ENCODE measurements at regions of chr1 and their contacts with region 1.

Region 1: DNA sequence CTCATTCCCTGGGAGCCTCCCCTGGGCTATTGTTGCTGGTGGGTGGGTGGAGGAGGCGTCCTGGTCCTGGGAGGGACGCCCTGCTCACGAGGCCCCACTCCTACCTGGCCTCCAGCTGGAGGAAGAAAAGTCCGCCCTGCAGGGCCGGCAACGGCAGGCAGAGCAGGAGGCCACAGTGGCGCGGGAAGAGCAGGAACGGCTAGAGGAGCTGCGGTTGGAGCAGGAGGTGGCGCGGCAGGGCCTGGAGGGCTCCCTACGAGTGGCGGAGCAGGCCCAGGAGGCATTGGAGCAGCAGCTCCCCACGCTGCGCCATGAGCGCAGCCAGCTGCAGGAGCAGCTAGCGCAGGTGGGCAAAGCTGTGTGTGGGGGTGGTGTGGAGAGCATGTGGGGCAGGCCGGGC is 24.9 kb downstream of the CROCC start:
- DNase-seq: no peak
- ATAC-seq: no peak
- H3K4me3 ChIP-seq: no peak overlapping the region
- H3K4me3 Mint-ChIP-seq: no peak overlapping the region
- H3K27ac ChIP-seq: no peak overlapping the region
- H3K27ac Mint-ChIP-seq: no peak overlapping the region
- H3K4me1 ChIP-seq: peaks cover under 1% of the 10 kb centered on the region
- H3K4me1 Mint-ChIP-seq: no peaks in the 10 kb centered on the region
- H3K27me3 ChIP-seq: no peaks in the 10 kb centered on the region
- H3K27me3 Mint-ChIP-seq: no peaks in the 10 kb centered on the region
- CTCF ChIP-seq: no peak

Region 2: GRCh38 chr1:16375521-16376359 is 570.9 kb before region 1 on chr1:
- intact Hi-C with region 1: no loop called
- DNase-seq: no peak
- ATAC-seq: no peak
- H3K4me3 ChIP-seq: no peak overlapping the region
- H3K4me3 Mint-ChIP-seq: peak overlapping the region; percentile 28
- H3K27ac ChIP-seq: no peak overlapping the region
- H3K27ac Mint-ChIP-seq: peak overlapping the region; percentile 40 to 58
- H3K4me1 ChIP-seq: peaks cover 52% of the 10 kb centered on the region
- H3K4me1 Mint-ChIP-seq: peaks cover 70 to 75% of the 10 kb centered on the region in 2 donors
- H3K27me3 ChIP-seq: no peaks in the 10 kb centered on the region
- H3K27me3 Mint-ChIP-seq: no peaks in the 10 kb centered on the region
- CTCF ChIP-seq: no peak

Region 3: DNA sequence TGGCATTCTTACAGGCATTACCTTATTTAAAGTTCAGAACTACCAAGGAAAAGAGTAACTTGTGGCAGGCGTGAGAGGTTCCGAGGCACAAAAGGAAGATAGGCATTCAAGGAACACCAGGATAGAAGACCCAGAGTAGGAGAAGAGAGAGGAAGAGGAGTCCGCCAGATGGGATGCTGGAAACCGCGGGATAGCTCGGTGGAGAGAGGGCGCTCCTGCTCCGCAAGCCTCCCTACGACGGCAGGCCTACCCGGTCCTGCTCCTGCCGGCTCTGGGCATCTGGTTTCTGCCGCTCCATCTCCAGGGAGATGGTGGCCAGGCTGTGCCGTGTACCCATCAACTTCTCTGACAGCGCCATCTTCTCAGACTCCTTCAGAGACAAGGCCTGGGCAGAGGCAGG is 327.9 kb before region 1 on chr1:
- intact Hi-C with region 1: loop called (anchors 2 kb)
- DNase-seq: no peak
- ATAC-seq: no peak
- H3K4me3 ChIP-seq: no peak overlapping the region
- H3K4me3 Mint-ChIP-seq: no peak overlapping the region
- H3K27ac ChIP-seq: no peak overlapping the region
- H3K27ac Mint-ChIP-seq: no peak overlapping the region
- H3K4me1 ChIP-seq: peaks cover 7% of the 10 kb centered on the region
- H3K4me1 Mint-ChIP-seq: no peaks in the 10 kb centered on the region
- H3K27me3 ChIP-seq: no peaks in the 10 kb centered on the region
- H3K27me3 Mint-ChIP-seq: no peaks in the 10 kb centered on the region
- CTCF ChIP-seq: no peak

Region 4: GRCh38 chr1:17045634-17046333 is 99.1 kb after region 1 on chr1:
- intact Hi-C with region 1: loop called (anchors 1 kb)
- DNase-seq: peak in 1 of 2 donors; percentile 58
- ATAC-seq: peak in 1 of 3 donors; percentile 31
- H3K4me3 ChIP-seq: no peak overlapping the region
- H3K4me3 Mint-ChIP-seq: no peak overlapping the region
- H3K27ac ChIP-seq: no peak overlapping the region
- H3K27ac Mint-ChIP-seq: peak overlapping the region in 1 of 2 donors; percentile 79
- H3K4me1 ChIP-seq: no peaks in the 10 kb centered on the region
- H3K4me1 Mint-ChIP-seq: peaks cover 5 to 14% of the 10 kb centered on the region in 2 donors
- H3K27me3 ChIP-seq: no peaks in the 10 kb centered on the region
- H3K27me3 Mint-ChIP-seq: no peaks in the 10 kb centered on the region
- CTCF ChIP-seq: peak; percentile 30